B cell (primary cell): ENCODE measurements at regions of chr17 and their contacts with region 1.

Region 1: GRCh38 chr17:81666342-81667191 is at the starts of genes CCDC137 and OXLD1:
- DNase-seq: peak; percentile 94
- ATAC-seq: peak; percentile 97
- H3K4me3 ChIP-seq: peak within 1 kb of the TSS; percentile 77 to 98 (median 93)
- H3K4me3 Mint-ChIP-seq: peak within 1 kb of the TSS; percentile 91
- H3K27ac ChIP-seq: peak within 1 kb of the TSS; percentile 69 to 80
- H3K27ac Mint-ChIP-seq: peak within 1 kb of the TSS; percentile 96
- H3K4me1 ChIP-seq: peaks cover 19 to 25% of the 10 kb centered on the region in 2 donors
- H3K4me1 Mint-ChIP-seq: peaks cover 23% of the 10 kb centered on the region
- H3K27me3 ChIP-seq: no peaks in the 10 kb centered on the region
- H3K27me3 Mint-ChIP-seq: no peaks in the 10 kb centered on the region
- CTCF ChIP-seq: no peak
- total RNA-seq, gene CCDC137: 36.0 and 41.7 TPM in 2 replicates
- total RNA-seq, gene OXLD1: 38.6 and 39.5 TPM in 2 replicates

Region 2: DNA sequence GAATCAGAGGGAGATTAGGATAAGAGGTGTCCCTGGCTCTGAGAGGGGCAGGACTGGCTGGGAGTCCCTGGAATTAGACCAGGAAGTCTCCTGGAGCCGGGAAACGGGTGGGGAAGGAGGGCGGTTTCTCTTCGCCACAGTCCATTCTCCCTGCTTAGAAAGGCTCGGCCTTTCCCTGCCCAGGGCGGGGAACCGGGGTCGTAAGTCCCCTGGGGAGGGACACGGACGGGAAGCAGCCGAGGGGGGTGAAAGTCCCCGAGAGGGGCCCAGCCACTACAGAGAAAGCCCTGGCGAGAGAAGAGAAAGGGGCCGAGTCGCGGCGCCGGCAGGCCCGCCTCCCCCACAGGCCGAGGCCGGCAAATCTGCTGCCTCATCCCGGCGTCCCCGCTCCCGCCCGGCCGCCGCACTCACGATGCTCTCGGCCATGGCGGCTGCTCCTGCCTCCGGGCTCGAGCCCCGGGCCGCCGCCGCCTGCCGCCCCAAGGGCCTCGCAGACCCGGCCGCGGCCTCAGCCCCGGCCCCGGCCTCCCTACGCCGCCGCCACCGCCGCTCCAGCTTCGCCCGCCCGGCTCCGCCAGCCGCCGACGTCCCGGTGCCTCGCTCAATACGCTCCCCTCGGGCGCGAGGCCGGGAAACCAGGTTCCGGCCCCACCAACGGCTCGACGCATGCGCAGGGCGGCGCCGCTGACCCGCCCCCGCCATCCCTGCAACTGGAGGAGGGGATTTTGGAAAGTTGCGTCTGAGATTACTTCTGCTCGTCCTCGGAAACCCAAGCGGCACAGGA is 29.9 kb before region 1 on chr17 and contains the starts of genes NPLOC4 and TSPAN10:
- CTCF ChIA-PET with region 1: no interaction called
- POLR2A ChIA-PET with region 1: no interaction called
- intact Hi-C with region 1: loop called (anchors 1 kb)
- DNase-seq: peak; percentile 91
- ATAC-seq: peak; percentile 94
- H3K4me3 ChIP-seq: peak within 1 kb of the TSS; percentile 45 to 88 (median 77)
- H3K4me3 Mint-ChIP-seq: peak within 1 kb of the TSS; percentile 95
- H3K27ac ChIP-seq: peak within 1 kb of the TSS in 1 of 2 donors; percentile 81
- H3K27ac Mint-ChIP-seq: peak within 1 kb of the TSS; percentile 89
- H3K4me1 ChIP-seq: peaks cover 11 to 25% of the 10 kb centered on the region in 2 donors
- H3K4me1 Mint-ChIP-seq: peaks cover 21% of the 10 kb centered on the region
- H3K27me3 ChIP-seq: no peaks in the 10 kb centered on the region
- H3K27me3 Mint-ChIP-seq: no peaks in the 10 kb centered on the region
- CTCF ChIP-seq: no peak
- total RNA-seq, gene NPLOC4: 101 and 103 TPM in 2 replicates
- total RNA-seq, gene TSPAN10: 1.1 and 1.6 TPM in 2 replicates

Region 3: GRCh38 chr17:81702971-81703746 is 36.6 kb after region 1 on chr17 and contains the start of gene MRPL12:
- CTCF ChIA-PET with region 1: no interaction called
- POLR2A ChIA-PET with region 1: no interaction called
- intact Hi-C with region 1: loop called (anchors 1 kb)
- DNase-seq: peak; percentile 94
- ATAC-seq: peak; percentile 95
- H3K4me3 ChIP-seq: peak within 1 kb of the TSS; percentile 45 to 98 (median 68)
- H3K4me3 Mint-ChIP-seq: peak within 1 kb of the TSS; percentile 90
- H3K27ac ChIP-seq: peak within 1 kb of the TSS; percentile 57 to 97
- H3K27ac Mint-ChIP-seq: peak within 1 kb of the TSS; percentile 91
- H3K4me1 ChIP-seq: peaks cover 24 to 32% of the 10 kb centered on the region in 2 donors
- H3K4me1 Mint-ChIP-seq: peaks cover 33% of the 10 kb centered on the region
- H3K27me3 ChIP-seq: no peaks in the 10 kb centered on the region
- H3K27me3 Mint-ChIP-seq: no peaks in the 10 kb centered on the region
- CTCF ChIP-seq: peak; percentile 36
- total RNA-seq, gene MRPL12: 23.8 and 24.1 TPM in 2 replicates